ENCODE measurements at regions of chr3 and their contacts with region 1.

Region 1: GRCh38 chr3:4584456-4585249 is 91.5 kb downstream of the ITPR1 start:
- DNase-seq: no peak

Region 2: GRCh38 chr3:4493014-4493940 is 91.4 kb before region 1 on chr3 and contains the start of gene ITPR1:
- intact Hi-C with region 1: loop called in 1 of 2 experiments (anchors 5 kb)
- DNase-seq: peak; percentile 99
- total RNA-seq, gene ITPR1: 136 to 147 TPM

Region 3: DNA sequence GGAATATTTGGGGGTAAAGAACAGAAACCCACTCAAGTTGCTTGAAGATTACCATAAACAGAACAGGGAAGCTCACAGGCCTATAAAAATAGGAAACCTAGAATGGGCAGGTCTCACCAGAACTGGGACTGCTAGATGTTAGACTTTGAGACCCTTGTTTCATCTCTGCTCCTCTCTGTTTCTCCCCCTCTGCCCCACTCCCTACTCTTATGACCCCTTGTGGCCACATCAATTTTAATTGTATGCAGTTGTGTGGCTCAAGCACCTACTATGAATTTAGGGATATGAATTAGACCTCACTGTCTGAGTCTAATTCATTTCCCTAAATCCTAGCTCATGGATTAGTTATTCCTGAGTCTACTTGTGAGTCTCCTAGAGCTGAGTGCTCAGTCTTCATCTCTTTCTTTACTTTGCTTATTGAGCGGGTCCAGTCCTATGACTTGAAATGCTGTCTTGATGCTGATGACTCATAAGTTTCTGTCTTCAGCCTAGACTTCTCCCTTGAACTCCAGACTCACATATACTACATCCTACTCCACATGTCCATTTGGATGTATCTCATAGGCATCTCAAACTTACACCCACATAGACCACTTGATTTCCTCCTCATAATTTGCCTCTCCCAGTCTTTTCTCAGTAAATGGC is 12.8 kb before region 1 on chr3:
- intact Hi-C with region 1: no loop called
- DNase-seq: no peak

Region 4: DNA sequence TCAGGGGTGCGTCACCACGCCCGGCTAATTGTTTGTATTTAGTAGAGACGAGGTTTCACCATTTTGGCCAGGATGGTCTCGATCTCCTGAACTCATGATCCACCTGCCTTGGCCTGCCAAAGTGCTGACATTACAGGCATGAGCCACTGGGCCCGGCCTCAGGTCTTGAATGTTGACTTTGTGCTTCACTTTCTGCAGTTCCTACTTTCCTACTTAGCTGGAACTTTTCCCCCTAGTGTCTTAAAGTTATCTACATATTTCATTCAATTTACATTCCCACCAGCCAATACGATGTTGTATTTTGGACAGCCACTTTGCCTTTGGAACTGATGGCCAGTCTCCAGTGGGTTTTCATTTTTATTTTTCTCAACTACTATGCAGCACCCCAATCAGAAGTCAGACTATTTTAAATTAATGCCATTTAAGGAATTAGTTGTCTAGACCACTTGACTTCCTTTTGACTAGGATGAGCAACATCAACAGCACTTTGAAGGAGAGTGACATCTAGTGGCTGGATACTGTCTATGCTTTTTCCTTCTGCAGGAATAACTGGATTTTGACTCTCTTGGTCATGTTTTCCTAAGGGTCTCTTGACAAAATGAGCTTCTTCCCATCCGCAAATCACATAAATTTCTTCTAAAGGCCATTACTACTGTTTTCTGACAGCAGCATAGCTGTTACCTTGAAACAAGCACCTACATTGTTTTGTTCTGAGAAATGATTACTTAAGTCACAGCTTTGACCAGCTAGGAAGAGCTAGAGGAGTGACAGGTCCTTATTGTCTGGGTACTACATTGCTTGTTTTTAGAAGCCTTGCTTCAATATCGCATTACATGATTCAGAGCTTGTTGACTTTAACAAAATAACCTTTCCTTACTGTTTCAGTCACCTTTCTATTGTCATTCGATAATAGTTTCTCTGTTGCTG is 48.7 kb after region 1 on chr3:
- intact Hi-C with region 1: no loop called
- DNase-seq: no peak